Adrenal gland (tissue), 19 donors: ENCODE measurements at regions of chr1 and their contacts with region 1.

Region 1: GRCh38 chr1:112715264-112716053 is at the start of gene PPM1J:
- DNase-seq: peak; percentile 97 to 99 (median 99)
- H3K4me3 ChIP-seq: peak within 1 kb of the TSS in 2 of 4 donors; percentile 34 to 68
- H3K27ac ChIP-seq: peak within 1 kb of the TSS in 3 of 5 donors; percentile 35 to 70 (median 49)
- H3K4me1 ChIP-seq: peaks cover 19 to 24% of the 10 kb centered on the region in 2 donors
- H3K27me3 ChIP-seq: no peaks in the 10 kb centered on the region
- CTCF ChIP-seq: peak in 1 of 6 experiments; percentile 4
- POLR2A ChIP-seq: peak; percentile 44 to 61
- total RNA-seq, gene PPM1J: 0.31 to 4.7 (median 0.72) TPM in 8 of 9 donors, not detected in the other

Region 2: DNA sequence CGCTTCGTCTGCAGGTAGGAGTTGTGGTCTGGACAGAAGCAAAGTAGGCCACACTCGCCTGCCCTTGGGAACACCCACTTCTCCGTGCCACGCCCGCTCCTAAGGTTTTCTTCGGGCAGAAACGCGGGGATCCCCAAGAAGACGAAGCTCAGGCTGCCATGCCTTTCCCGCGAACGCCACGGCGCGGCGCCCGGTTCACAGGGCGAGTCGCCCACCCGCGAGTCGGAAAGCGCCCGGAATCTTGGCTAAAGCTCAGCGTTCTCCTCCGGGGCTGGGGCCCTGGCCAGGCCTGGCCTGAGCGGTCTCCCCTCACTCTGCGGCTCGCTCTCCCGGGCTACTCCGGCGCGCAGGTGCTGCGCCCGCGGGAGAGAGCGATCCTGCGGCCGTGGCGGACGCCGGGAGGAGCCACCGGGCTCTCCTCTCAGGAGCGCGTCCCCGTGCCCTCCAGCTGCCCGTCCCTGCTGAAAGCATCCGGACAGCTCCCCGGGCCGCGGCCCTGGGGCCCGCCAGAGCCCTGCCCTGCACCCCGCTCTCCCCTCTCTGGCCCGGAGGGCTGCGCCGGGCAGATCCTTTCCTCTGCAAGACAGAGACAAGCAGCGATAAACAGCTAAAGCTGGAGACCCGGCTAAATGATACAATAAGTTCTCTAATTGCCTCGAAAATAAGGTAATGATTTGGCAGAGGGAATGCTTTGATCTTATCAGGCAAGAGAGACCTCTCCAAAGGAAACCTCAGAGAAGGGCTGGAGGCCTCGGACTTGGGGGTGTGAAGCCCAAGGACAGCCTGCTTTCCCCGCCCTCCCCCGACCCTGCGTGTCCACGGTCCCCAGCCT is 213.4 kb before region 1 on chr1:
- intact Hi-C with region 1: loop called in 1 of 2 experiments (anchors 5 kb)
- DNase-seq: peak; percentile 70 to 83 (median 80)
- H3K4me3 ChIP-seq: peak overlapping the region in 2 of 4 donors; percentile 44 to 74
- H3K27ac ChIP-seq: peak overlapping the region in 2 of 5 donors; percentile 47 to 50
- H3K4me1 ChIP-seq: peaks cover 0 to 10% of the 10 kb centered on the region in 2 donors
- H3K27me3 ChIP-seq: no peaks in the 10 kb centered on the region
- CTCF ChIP-seq: peak; percentile 58 to 77 (median 68)
- POLR2A ChIP-seq: peak in 1 of 2 donors; percentile 8

Region 3: GRCh38 chr1:112619520-112620376 is 95.7 kb before region 1 on chr1 and contains the start of gene CAPZA1:
- intact Hi-C with region 1: loop called in 1 of 2 experiments (anchors 5 kb)
- DNase-seq: peak; percentile 89 to 96 (median 92)
- H3K4me3 ChIP-seq: peak within 1 kb of the TSS; percentile 69 to 93 (median 88)
- H3K27ac ChIP-seq: peak within 1 kb of the TSS; percentile 95 to 99 (median 96)
- H3K4me1 ChIP-seq: peaks cover 17 to 51% of the 10 kb centered on the region in 2 donors
- H3K27me3 ChIP-seq: no peaks in the 10 kb centered on the region
- CTCF ChIP-seq: no peak
- POLR2A ChIP-seq: peak; percentile 71 to 81
- total RNA-seq, gene CAPZA1: 65.2 to 178 (median 96.5) TPM

Region 4: DNA sequence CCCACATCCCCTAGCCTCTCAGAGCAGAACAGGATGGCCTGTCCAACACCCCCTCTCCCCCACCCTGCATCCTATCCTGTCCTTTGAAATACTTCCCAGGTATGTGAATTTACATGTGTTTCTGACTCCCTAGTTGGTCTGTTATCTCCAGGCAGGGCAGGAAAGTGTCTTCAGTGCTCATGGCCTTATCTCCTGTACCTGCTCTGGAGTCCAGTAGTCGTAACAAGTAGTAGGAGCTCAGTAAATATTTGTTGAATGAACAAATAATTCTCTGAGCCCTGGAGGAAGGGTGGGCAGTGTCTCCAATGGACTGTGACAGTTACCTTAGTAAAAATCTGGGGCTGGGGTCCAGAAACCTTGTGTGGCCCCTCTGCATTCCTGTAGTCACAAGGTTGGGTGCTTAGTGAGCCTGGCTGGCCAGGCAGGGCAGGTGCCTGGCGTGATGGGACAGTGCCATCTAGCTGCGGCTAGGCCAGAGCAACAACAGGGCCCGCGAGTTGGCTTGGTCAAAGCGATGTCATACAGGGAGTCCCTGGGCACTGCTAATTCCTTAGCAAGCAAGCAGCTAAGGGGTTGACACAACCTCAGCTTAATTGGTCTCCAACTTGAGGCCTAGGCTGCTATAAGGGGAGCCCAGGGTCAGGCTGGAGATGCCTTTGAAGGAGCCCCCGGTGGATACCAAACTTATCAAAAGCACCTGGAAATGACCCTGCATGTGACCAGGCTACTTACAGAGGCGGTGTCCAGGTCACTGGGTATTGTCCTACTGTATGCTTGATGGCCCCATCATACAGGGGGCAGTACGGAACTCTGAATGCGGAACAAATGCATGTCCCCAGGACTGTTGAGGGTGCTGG is 88.7 kb after region 1 on chr1:
- intact Hi-C with region 1: loop called (anchors 2 kb)
- DNase-seq: peak; percentile 72 to 91 (median 84)
- H3K4me3 ChIP-seq: no peak overlapping the region
- H3K27ac ChIP-seq: no peak overlapping the region
- H3K4me1 ChIP-seq: no peaks in the 10 kb centered on the region
- H3K27me3 ChIP-seq: no peaks in the 10 kb centered on the region
- CTCF ChIP-seq: peak; percentile 55 to 92 (median 84)
- POLR2A ChIP-seq: no peak

Region 5: GRCh38 chr1:113042285-113043143 is 327.1 kb after region 1 on chr1:
- intact Hi-C with region 1: loop called (anchors 10 kb)
- DNase-seq: peak; percentile 67 to 87 (median 71)
- H3K4me3 ChIP-seq: no peak overlapping the region
- H3K27ac ChIP-seq: no peak overlapping the region
- H3K4me1 ChIP-seq: peaks cover 7 to 8% of the 10 kb centered on the region in 2 donors
- H3K27me3 ChIP-seq: no peaks in the 10 kb centered on the region
- CTCF ChIP-seq: peak; percentile 37 to 81 (median 66)
- POLR2A ChIP-seq: no peak